K562 (cell line): ENCODE measurements at regions of chr2 and their contacts with region 1.

Region 1: GRCh38 chr2:10072656-10073480 is 7.3 kb downstream of the CYS1 start:
- DNase-seq: peak; percentile 82 to 90 (median 84)
- ATAC-seq: peak; percentile 97
- H3K4me3 ChIP-seq: no peak overlapping the region
- H3K27ac ChIP-seq: no peak overlapping the region
- H3K4me1 ChIP-seq: peaks cover 2 to 11% of the 10 kb centered on the region in 2 experiments; a peak in 3 of 5 replicates
- H3K27me3 ChIP-seq: peaks cover 30 to 40% of the 10 kb centered on the region in 2 experiments
- CTCF ChIP-seq: peak; percentile 92 to 93 (median 93)
- EP300 ChIP-seq: no peak; the same call in 1 of the 2 replicates
- POLR2A ChIP-seq: no peak
- RAD21 ChIP-seq: peak; percentile 77 to 89

Region 2: GRCh38 chr2:10097352-10098148 is 24.7 kb after region 1 on chr2:
- CTCF ChIA-PET with region 1: interaction called, 3 read pairs
- POLR2A ChIA-PET with region 1: interaction called, 3 read pairs
- in situ Hi-C with region 1: no loop called
- intact Hi-C with region 1: loop called (anchors 1 kb)
- DNase-seq: peak; percentile 79 to 87 (median 86)
- ATAC-seq: peak; percentile 98
- H3K4me3 ChIP-seq: no peak overlapping the region
- H3K27ac ChIP-seq: no peak overlapping the region
- H3K4me1 ChIP-seq: peaks cover 2 to 14% of the 10 kb centered on the region in 2 experiments; a peak in 3 of 5 replicates
- H3K27me3 ChIP-seq: peaks cover 8 to 22% of the 10 kb centered on the region in 2 experiments; a peak in 3 of 5 replicates
- CTCF ChIP-seq: peak; percentile 93 to 97 (median 96)
- EP300 ChIP-seq: no peak
- POLR2A ChIP-seq: no peak
- RAD21 ChIP-seq: peak; percentile 73 to 76

Region 3: GRCh38 chr2:10668402-10669012 is 595.6 kb after region 1 on chr2:
- CTCF ChIA-PET with region 1: interaction called, 3 read pairs
- POLR2A ChIA-PET with region 1: no interaction called
- in situ Hi-C with region 1: no loop called
- intact Hi-C with region 1: loop called (anchors 5 kb)
- DNase-seq: peak in 2 of 4 experiments; percentile 28 to 77
- ATAC-seq: peak; percentile 79
- H3K4me3 ChIP-seq: no peak overlapping the region
- H3K27ac ChIP-seq: no peak overlapping the region
- H3K4me1 ChIP-seq: no peaks in the 10 kb centered on the region
- H3K27me3 ChIP-seq: no peaks in the 10 kb centered on the region
- CTCF ChIP-seq: peak; percentile 42 to 66 (median 52); a peak in 4 of 6 replicates
- EP300 ChIP-seq: no peak
- POLR2A ChIP-seq: no peak
- RAD21 ChIP-seq: peak; percentile 69 to 70